ENCODE measurements at regions of chr17 and their contacts with region 1.

Region 1: GRCh38 chr17:3893003-3893719 is at the start of gene CAMKK1:
- DNase-seq: peak; percentile 89 to 93
- ATAC-seq: peak; percentile 82 to 91 (median 84)
- H3K4me3 ChIP-seq: peak within 1 kb of the TSS; percentile 52
- H3K4me3 Mint-ChIP-seq: peak within 1 kb of the TSS; percentile 85
- H3K27ac ChIP-seq: peak within 1 kb of the TSS; percentile 8
- H3K27ac Mint-ChIP-seq: peak within 1 kb of the TSS; percentile 60 to 77
- H3K4me1 ChIP-seq: peaks cover 19% of the 10 kb centered on the region
- H3K4me1 Mint-ChIP-seq: peaks cover 18 to 30% of the 10 kb centered on the region in 2 donors
- H3K27me3 ChIP-seq: no peaks in the 10 kb centered on the region
- H3K27me3 Mint-ChIP-seq: no peaks in the 10 kb centered on the region
- CTCF ChIP-seq: no peak
- total RNA-seq, gene CAMKK1: 3.2 to 4.3 (median 3.9) TPM

Region 2: DNA sequence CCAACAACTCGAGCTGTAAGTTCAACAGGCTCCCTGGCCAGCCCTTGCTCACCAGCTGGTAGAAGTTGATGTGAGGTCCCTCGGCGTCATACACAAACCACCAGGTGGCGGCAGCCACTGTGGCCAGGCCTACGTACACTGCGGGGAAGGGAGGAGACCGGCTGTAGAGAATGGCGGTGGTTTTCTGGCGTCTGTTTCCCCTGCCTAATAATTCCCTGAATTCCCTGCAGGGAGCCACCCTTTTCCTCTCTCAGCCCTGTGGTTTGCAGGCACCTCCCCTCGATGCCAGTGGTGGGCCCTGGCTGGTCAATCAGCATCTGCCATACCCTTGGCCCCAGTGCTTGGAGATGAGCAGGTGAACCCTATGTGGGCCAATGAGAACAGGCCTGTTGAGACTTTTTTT is 42.0 kb after region 1 on chr17:
- intact Hi-C with region 1: loop called (anchors 2 kb)
- DNase-seq: peak in 1 of 2 donors; percentile 59
- ATAC-seq: peak; percentile 65 to 78 (median 77)
- H3K4me3 ChIP-seq: no peak overlapping the region
- H3K4me3 Mint-ChIP-seq: no peak overlapping the region
- H3K27ac ChIP-seq: no peak overlapping the region
- H3K27ac Mint-ChIP-seq: peak overlapping the region in 1 of 2 donors; percentile 45
- H3K4me1 ChIP-seq: peaks cover 6% of the 10 kb centered on the region
- H3K4me1 Mint-ChIP-seq: peaks cover 5 to 20% of the 10 kb centered on the region in 2 donors
- H3K27me3 ChIP-seq: no peaks in the 10 kb centered on the region
- H3K27me3 Mint-ChIP-seq: no peaks in the 10 kb centered on the region
- CTCF ChIP-seq: peak; percentile 17

Region 3: GRCh38 chr17:3964203-3965117 is 71.3 kb after region 1 on chr17 and contains the start of gene ATP2A3:
- intact Hi-C with region 1: loop called (anchors 5 kb)
- DNase-seq: peak; percentile 63 to 83
- ATAC-seq: peak; percentile 82 to 84 (median 84)
- H3K4me3 ChIP-seq: peak within 1 kb of the TSS; percentile 94
- H3K4me3 Mint-ChIP-seq: peak within 1 kb of the TSS; percentile 91
- H3K27ac ChIP-seq: peak within 1 kb of the TSS; percentile 77
- H3K27ac Mint-ChIP-seq: peak within 1 kb of the TSS; percentile 84 to 90
- H3K4me1 ChIP-seq: peaks cover 69% of the 10 kb centered on the region
- H3K4me1 Mint-ChIP-seq: peaks cover 37 to 52% of the 10 kb centered on the region in 2 donors
- H3K27me3 ChIP-seq: no peaks in the 10 kb centered on the region
- H3K27me3 Mint-ChIP-seq: no peaks in the 10 kb centered on the region
- CTCF ChIP-seq: no peak
- total RNA-seq, gene ATP2A3: 326 to 397 (median 377) TPM